ENCODE measurements at regions of chr5 and their contacts with region 1.

Region 1: GRCh38 chr5:158553195-158553961 is 546.3 kb downstream of the EBF1 start:
- DNase-seq: peak in 1 of 2 donors; percentile 28
- ATAC-seq: peak; percentile 64 to 66
- H3K4me3 ChIP-seq: no peak overlapping the region
- H3K27ac ChIP-seq: peak overlapping the region; percentile 51 to 60 (median 57)
- H3K4me1 ChIP-seq: no peaks in the 10 kb centered on the region
- H3K27me3 ChIP-seq: no peaks in the 10 kb centered on the region
- CTCF ChIP-seq: no peak
- POLR2A ChIP-seq: no peak

Region 2: DNA sequence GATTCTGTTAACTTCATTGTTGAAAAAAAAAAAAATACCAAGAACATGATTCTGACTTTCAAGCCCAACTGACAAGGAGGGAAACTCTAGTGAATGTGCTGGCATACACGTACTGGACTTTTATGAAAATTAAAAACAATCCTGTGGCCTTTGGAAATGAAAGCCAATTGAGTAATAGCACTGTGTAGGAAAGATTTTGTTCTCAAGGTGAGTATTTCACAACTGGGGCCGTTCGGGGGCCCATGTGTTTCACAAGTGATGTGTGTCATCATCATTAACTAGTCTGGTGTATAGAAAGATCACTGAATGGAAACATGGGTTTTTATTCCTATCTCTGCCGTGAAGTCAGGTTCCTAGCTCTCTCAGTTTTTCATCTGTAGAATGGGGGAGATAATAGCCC is 89.4 kb before region 1 on chr5:
- in situ Hi-C with region 1: no loop called
- intact Hi-C with region 1: loop called (anchors 10 kb)
- DNase-seq: peak; percentile 30 to 70
- ATAC-seq: peak; percentile 57 to 67
- H3K4me3 ChIP-seq: no peak overlapping the region
- H3K27ac ChIP-seq: peak overlapping the region in 3 of 4 donors; percentile 36 to 59 (median 49)
- H3K4me1 ChIP-seq: peaks cover 7 to 10% of the 10 kb centered on the region in 2 donors
- H3K27me3 ChIP-seq: no peaks in the 10 kb centered on the region
- CTCF ChIP-seq: no peak
- POLR2A ChIP-seq: no peak

Region 3: DNA sequence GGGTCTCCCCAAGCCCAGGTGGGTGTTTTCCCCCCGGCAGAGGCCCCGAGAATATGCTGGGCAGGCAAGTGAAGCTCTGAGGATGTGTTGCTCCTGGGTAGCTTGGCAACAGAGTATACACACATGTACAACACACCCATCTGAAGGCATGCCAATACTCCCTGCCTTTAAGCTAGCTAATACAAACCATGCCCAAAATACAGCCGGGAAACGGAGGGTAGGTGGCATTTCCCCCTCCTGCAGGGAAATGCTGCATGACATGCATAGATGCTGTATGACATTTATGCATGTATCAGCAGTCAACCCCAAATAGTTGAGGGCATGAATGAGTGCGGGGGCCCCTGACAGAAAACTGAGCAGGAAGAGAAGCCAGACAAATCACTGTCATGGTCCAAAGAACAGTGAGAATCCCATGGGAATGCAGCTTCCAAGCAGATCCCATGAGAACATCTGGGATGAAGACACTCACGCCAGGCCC is 67.7 kb before region 1 on chr5:
- in situ Hi-C with region 1: no loop called
- intact Hi-C with region 1: loop called (anchors 5 kb)
- DNase-seq: peak in 1 of 2 donors; percentile 35
- ATAC-seq: peak in 1 of 2 donors; percentile 50
- H3K4me3 ChIP-seq: no peak overlapping the region
- H3K27ac ChIP-seq: peak overlapping the region; percentile 25 to 62 (median 35)
- H3K4me1 ChIP-seq: no peaks in the 10 kb centered on the region
- H3K27me3 ChIP-seq: no peaks in the 10 kb centered on the region
- CTCF ChIP-seq: no peak
- POLR2A ChIP-seq: no peak

Measured in gastrocnemius medialis (tissue), 4 donors.